Posterior vena cava (tissue), 2 donors: ENCODE measurements at regions of chrX and their contacts with region 1.

Region 1: GRCh38 chrX:74550295-74550802 is 64.1 kb downstream of the RLIM start:
- DNase-seq: peak; percentile 95

Region 2: GRCh38 chrX:74865725-74866124 is 315.4 kb after region 1 on chrX:
- intact Hi-C with region 1: loop called in 1 of 2 experiments (anchors 10 kb)
- DNase-seq: no peak